Psoas muscle (tissue), 8 donors: ENCODE measurements at regions of chr2 and their contacts with region 1.

Region 1: DNA sequence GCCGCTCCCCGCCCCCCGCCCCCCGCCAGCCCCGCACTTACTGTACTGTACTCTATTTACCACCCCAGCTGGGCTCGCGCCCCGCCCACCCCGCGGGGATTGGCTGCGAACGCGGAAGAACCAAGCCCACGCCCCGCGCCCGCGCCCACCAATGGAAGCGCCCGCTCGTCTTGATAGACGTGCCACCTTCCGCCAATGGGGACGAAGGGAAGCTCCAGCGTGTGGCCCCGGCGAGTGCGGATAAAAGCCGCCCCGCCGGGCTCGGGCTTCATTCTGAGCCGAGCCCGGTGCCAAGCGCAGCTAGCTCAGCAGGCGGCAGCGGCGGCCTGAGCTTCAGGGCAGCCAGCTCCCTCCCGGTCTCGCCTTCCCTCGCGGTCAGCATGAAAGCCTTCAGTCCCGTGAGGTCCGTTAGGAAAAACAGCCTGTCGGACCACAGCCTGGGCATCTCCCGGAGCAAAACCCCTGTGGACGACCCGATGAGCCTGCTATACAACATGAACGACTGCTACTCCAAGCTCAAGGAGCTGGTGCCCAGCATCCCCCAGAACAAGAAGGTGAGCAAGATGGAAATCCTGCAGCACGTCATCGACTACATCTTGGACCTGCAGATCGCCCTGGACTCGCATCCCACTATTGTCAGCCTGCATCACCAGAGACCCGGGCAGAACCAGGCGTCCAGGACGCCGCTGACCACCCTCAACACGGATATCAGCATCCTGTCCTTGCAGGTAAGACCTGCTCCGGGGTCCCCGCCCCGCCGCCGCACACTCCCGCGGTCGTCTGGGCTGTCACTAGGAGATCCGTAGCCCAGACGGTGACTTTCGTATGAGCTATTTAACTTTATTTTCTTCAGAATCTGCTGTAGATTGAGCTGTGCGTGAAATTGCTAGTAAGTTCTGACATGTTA is at the start of gene ID2:
- DNase-seq: peak; percentile 99
- ATAC-seq: peak; percentile 85 to 91 (median 88)
- H3K4me3 ChIP-seq: peak within 1 kb of the TSS; percentile 79
- H3K27ac ChIP-seq: peak within 1 kb of the TSS; percentile 93
- H3K4me1 ChIP-seq: peaks cover 18% of the 10 kb centered on the region
- H3K27me3 ChIP-seq: peaks cover 0 to 2% (median 0%) of the 10 kb centered on the region in 3 donors
- CTCF ChIP-seq: no peak
- total RNA-seq, gene ID2: 4.1 to 15.4 (median 11.8) TPM

Region 2: GRCh38 chr2:7097348-7097895 is 1584.6 kb before region 1 on chr2:
- intact Hi-C with region 1: loop called (anchors 5 kb)
- DNase-seq: peak; percentile 76 to 86
- ATAC-seq: peak; percentile 88 to 97 (median 89)
- H3K4me3 ChIP-seq: peak overlapping the region; percentile 26
- H3K27ac ChIP-seq: no peak overlapping the region
- H3K4me1 ChIP-seq: no peaks in the 10 kb centered on the region
- H3K27me3 ChIP-seq: no peaks in the 10 kb centered on the region
- CTCF ChIP-seq: peak; percentile 99

Region 3: DNA sequence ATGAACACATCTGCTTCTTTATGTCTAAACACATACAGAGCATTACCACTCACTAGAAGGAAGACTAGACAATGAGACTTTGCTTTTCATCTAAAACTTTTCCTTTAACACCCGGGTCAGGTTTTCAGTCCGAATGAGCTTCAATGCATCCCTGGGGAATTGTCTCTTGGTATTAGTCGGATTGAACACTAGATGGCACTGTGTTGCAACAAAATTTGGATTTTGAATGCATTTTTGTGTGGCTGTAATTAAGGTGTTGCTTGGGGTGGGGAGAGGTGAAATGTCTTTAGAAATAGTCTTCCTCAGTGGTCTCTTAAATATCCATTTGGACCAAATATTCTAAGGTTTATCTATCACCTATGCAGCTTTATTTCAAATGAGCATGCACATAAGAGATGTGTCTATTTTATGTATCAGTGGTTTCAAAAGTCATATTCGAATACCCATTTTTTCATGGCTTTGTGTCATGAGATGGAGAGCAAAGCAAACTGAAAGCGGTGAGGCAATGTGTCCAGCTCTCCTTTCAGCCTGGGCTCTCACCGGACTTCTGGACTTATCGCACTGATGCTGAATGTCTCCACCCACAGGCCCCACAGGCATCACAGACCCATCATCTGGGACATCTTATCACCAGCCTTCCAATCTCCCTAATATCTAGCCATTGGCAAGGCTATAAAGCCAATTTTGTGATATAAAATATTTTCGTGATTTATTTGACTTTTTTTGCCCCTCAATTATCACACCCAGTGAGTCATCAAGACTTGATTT is 1254.6 kb before region 1 on chr2:
- intact Hi-C with region 1: loop called in 1 of 2 experiments (anchors 2 kb)
- DNase-seq: no peak
- ATAC-seq: peak in 2 of 4 donors; percentile 36 to 67
- H3K4me3 ChIP-seq: no peak overlapping the region
- H3K27ac ChIP-seq: no peak overlapping the region
- H3K4me1 ChIP-seq: no peaks in the 10 kb centered on the region
- H3K27me3 ChIP-seq: peaks cover 0 to 44% (median 8%) of the 10 kb centered on the region in 3 donors
- CTCF ChIP-seq: peak; percentile 66

Region 4: GRCh38 chr2:8004250-8004681 is 677.8 kb before region 1 on chr2:
- intact Hi-C with region 1: loop called in 1 of 2 experiments (anchors 5 kb)
- DNase-seq: no peak
- ATAC-seq: peak; percentile 78 to 91 (median 84)
- H3K4me3 ChIP-seq: peak overlapping the region; percentile 35
- H3K27ac ChIP-seq: peak overlapping the region; percentile 81
- H3K4me1 ChIP-seq: peaks cover 13% of the 10 kb centered on the region
- H3K27me3 ChIP-seq: no peaks in the 10 kb centered on the region
- CTCF ChIP-seq: no peak

Region 5: DNA sequence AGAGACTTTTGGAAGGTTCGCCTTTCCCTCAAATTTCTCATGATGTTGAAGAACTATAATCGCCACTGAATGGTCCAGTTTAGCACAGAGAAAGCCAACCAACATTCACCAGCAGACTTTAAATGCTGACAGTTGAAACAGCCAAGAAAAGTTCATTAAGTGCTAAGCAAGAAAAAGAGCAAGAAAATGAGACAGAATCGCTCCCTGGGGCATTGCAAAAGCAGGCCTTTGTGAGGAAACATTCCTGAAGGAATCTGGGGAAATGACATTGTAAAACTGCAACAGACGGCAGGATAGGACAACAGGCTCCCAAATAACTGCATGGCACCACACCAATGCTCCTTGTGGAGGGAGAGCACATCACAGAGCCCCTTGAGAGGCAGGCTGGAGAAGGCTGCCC is 269.5 kb before region 1 on chr2:
- intact Hi-C with region 1: loop called in 1 of 2 experiments (anchors 10 kb)
- DNase-seq: peak; percentile 70 to 77
- ATAC-seq: peak in 1 of 4 donors; percentile 72
- H3K4me3 ChIP-seq: no peak overlapping the region
- H3K27ac ChIP-seq: no peak overlapping the region
- H3K4me1 ChIP-seq: peaks cover 5% of the 10 kb centered on the region
- H3K27me3 ChIP-seq: no peaks in the 10 kb centered on the region
- CTCF ChIP-seq: no peak

Region 6: DNA sequence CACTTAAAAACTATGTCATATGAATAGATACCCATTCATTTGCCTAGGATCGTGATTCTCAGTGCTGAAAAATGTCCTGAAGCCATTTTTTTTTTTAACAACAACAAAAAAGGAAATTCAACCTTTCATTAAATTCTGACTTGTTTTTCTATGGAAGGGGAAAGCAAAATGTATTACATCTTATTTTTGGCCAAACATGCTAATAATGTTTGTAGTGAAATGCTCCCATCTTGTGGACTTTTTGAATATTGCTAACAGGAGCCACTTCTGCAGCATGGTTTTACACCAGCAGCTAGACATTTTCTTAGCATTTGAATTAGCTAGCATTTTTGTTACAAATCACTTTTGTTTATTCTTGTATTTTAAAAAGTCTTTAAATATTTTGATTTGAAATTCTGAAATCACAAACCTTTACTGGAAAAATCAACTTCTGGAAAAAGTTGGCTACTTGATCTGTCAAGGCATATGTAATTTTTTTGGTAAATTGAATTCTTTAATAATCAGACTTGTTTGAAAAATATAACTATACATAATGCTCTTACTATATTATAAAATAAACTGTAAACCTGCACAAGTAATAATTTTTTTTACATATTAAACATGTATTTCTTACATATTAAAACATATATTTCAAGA is 79.6 kb after region 1 on chr2:
- intact Hi-C with region 1: no loop called
- DNase-seq: no peak
- ATAC-seq: no peak
- H3K4me3 ChIP-seq: no peak overlapping the region
- H3K27ac ChIP-seq: no peak overlapping the region
- H3K4me1 ChIP-seq: no peaks in the 10 kb centered on the region
- H3K27me3 ChIP-seq: no peaks in the 10 kb centered on the region
- CTCF ChIP-seq: peak; percentile 38